ENCODE measurements at regions of chr2 and their contacts with region 1.

Region 1: DNA sequence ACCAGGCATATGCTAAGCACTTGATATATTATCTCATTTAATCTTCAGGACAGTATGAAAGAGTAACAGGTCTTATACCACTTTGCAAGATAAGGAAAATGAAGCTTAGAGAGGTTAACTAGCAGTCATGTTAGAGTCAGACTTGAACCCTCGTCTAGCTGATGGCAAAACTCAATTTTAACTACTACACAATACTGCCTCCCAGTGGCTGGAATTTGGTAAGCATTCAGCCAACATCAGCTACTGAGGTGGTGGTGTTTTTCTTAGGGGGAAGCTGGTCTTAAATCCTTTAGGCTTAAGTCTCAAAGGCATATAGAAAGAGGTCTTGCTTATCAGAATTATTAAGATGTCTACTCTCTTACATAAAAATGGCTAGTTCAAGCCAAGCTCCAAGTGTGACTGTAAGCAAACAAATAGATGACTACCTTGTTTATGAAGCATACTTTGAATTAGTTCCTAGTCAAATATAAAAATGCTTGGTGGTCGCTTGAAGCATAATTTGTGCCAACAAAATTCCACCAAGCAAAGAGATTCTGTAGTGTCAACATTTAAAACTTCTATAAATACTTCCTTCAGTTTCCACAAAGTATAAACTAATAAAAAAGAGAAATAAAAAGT is 325.4 kb upstream of the FIGN start:
- DNase-seq: no peak
- ATAC-seq: peak; percentile 51

Region 2: DNA sequence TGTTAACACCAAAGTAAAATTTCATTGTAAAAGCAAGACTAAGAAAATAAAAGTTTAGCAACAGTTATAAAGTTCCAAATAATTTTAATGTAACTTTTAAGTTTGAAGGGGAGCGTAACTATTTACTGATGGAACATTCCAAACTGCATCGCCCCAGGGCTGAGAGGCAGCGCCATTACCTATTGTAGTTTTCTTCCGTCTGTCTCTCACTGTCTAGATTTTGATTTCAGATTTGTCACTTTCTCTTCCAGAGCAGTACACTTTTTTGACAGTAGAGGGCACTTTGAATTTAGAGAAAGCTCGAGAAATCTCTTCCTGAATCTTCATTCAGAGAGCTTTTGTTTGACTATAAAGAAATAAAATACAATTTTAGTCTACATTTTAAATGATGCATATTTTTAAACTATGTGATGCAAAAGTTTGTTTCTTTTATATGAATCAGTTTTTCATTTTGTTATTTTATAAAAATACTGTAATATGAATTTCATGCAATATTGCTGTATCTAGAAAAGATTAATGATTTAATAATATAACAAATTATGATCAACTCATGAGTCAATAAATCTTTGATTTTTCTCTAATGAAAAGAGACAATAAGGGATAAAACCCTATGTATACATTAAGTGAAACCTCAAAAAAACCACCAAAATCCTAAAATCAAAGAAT is 715.2 kb before region 1 on chr2:
- intact Hi-C with region 1: loop called (anchors 10 kb)
- DNase-seq: no peak
- ATAC-seq: no peak

Region 3: DNA sequence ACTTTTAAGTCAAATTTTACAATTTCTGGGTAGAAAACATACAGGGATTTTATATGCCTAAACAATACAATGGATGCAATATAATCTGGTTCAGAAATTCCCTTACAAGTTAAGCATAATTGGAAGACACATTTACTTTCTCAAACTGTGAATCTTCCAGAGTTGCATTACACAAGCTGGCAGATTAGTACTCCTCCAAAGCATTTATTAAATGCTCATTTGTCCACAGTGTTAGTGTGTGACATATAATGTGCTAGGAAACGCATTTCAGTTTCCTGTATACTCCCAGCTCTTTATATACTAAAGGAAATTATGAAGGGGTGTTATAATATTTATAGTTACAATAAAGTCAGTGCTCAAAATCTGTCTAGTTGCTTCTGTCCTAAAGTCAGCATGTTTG is 86.5 kb before region 1 on chr2:
- intact Hi-C with region 1: no loop called
- DNase-seq: no peak
- ATAC-seq: no peak